Activated T-helper 1 cell treated with anti-CD3 and anti-CD28 coated beads, Interleukin-12 subunit alpha, Interleukin-12 subunit beta, Interleukin-2, Interleukin-4 antibody, amounts not matched to agents 30 ng/mL and 10 ng/mL and 1 ng/mL, durations not matched to agents 14 hours and 24 hours and 36 hours (primary cell): ENCODE measurements at regions of chr18 and their contacts with region 1.

Region 1: GRCh38 chr18:12308386-12309100 is 502 bp downstream of the TUBB6 start:
- DNase-seq: peak; percentile 21
- H3K4me3 Mint-ChIP-seq: peak overlapping the region; percentile 80
- H3K27ac Mint-ChIP-seq: peak overlapping the region; percentile 76
- H3K4me1 Mint-ChIP-seq: peaks cover 19% of the 10 kb centered on the region
- H3K27me3 Mint-ChIP-seq: peaks cover 32% of the 10 kb centered on the region

Region 2: DNA sequence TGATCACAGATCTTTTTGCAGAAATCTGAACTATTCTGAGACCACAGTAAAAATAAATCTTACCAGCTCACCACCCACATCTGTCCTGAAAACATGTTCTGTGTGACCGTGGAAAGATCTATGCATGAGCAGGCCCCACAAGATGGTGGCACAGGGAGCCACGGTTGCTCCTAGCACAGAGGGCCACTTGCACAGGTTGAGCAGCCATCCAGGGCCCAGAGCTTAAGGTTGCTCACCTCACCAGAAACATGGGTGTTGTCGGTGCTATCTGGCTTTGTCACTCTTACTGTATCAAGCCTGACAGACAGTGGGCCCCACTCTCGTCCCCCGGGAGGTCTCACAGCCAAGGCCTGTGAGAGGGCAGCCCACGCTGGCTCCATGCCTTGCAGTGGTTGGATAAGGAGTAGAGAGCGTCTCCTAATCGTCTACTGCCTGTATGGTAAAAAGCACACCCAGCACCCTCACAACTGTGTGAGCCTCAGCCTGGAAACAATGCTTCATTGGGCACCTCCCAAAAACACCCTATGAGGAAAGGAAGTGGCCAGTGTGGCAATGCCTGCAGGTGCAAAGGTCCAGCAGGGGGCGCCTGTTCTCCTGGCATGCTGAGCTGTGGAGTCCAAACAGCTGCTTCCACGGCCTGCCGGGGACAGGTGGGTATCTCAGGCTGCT is 19.1 kb after region 1 on chr18:
- intact Hi-C with region 1: loop called (anchors 2 kb)
- DNase-seq: peak; percentile 62
- H3K4me3 Mint-ChIP-seq: no peak overlapping the region
- H3K27ac Mint-ChIP-seq: peak overlapping the region; percentile 27
- H3K4me1 Mint-ChIP-seq: peaks cover 15% of the 10 kb centered on the region
- H3K27me3 Mint-ChIP-seq: no peaks in the 10 kb centered on the region